ENCODE measurements at regions of chr10 and their contacts with region 1.

Region 1: DNA sequence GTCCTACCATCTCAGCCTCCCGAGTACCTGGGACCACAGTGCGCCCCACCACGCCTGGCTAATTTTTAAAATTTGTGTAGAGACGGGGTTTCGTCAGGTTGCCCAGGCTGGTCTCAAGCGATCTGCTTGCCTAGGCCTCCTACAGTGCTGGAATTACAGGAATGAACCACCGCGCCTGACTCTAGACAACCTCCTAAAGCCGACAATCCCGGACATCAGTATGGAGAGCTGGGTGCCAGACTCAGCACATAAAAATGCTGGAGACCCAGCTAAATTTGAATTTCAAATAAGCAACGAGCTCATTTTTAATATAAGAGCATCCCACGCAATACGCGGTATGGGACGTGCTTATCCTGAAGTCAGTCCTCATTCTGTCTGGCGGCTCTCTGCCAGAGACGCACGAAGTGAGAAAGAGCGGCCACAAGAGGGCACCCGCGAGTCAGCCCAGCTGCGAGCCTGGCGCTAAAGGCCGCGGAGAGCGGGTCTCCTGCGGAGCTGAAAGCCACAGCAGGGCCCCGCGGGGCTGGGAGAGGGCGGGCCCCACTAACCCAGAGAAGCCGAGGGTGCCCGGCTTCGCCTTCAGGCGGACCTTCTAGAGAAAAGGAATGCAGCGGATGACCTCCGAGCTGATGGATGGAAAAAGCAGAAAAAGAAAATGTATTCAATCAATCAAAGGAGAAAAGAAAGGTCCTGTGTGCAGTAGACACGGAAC is 7.0 kb downstream of the CALY start:
- DNase-seq: peak; percentile 90
- H3K4me3 Mint-ChIP-seq: peak overlapping the region; percentile 24
- H3K27ac Mint-ChIP-seq: no peak overlapping the region
- H3K4me1 Mint-ChIP-seq: peaks cover 14% of the 10 kb centered on the region
- H3K27me3 Mint-ChIP-seq: peaks cover 42% of the 10 kb centered on the region

Region 2: DNA sequence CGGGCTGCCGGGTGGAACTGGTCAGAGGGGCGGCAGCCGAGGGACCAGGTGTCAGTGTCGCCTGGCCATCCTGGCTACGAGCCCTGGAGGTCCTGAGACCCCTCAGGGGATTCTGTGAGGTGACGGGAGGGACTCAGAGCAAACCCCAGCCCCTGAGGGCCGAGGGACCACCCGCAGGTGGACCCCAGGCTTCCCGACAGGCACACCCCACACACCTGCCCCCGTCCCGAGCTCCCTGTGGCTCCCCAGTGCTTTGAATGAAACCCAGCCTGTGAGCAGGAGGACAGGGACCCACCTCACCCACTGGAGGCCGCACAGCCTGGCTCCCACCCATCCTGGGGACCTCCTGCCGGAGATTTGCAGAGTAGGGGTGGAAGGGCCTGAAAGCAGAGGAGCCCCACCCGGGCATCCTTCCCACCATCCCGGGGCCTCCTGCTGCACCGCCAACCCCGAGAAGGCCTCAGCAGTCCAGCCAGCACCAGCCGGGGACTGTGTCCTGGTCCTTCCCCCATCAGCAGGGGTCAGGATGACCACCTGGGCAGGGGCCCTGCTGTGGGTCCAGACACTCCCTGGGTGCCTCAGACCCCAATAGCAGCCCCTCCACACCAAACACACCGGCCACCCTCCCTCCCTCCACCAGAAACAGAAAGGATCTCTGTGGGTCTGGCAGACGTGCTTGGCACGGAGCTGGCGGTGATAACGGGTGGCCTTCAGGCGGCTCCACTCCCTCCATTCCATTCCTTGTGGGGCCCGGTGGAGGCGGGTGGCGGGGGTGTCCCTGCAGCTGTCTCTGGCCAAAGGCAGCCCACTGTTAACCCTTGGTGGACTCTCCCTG is 78.0 kb before region 1 on chr10:
- CTCF ChIA-PET with region 1: no interaction called
- intact Hi-C with region 1: no loop called
- DNase-seq: no peak
- H3K4me3 Mint-ChIP-seq: no peak overlapping the region
- H3K27ac Mint-ChIP-seq: no peak overlapping the region
- H3K4me1 Mint-ChIP-seq: no peaks in the 10 kb centered on the region
- H3K27me3 Mint-ChIP-seq: no peaks in the 10 kb centered on the region

Region 3: GRCh38 chr10:133318494-133319127 is 11.0 kb before region 1 on chr10:
- CTCF ChIA-PET with region 1: interaction called, 10 read pairs
- intact Hi-C with region 1: no loop called
- DNase-seq: peak; percentile 74
- H3K4me3 Mint-ChIP-seq: peak overlapping the region; percentile 59
- H3K27ac Mint-ChIP-seq: no peak overlapping the region
- H3K4me1 Mint-ChIP-seq: peaks cover 7% of the 10 kb centered on the region
- H3K27me3 Mint-ChIP-seq: peaks cover 6% of the 10 kb centered on the region

Region 4: DNA sequence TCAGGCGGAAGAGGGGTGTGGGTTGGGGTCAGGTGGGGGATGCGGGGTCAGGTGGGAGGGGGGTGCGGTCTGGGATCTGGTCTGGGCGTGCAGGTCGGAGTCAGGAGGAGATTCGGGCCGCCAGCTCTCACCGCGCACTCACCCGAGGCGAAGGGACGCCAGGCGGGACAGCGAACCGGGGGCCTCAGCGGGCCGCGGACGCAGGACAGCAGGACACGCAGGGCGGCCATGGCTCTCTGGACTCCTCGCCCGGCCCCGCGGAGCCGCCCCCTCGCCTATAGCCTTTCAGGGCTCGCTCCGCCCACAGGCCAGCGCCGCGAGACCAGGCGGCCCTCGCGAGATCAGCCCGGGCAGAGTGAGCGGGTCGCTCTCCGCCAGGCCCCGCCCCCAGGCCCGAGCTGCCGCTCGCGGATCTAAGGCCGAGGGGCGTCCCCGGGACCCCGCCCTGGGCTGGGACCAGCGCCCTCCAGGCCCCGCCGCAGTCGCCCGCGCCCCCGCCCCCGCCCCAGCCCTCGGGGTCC is 43.5 kb after region 1 on chr10 and contains the start of gene ECHS1:
- CTCF ChIA-PET with region 1: interaction called, 5 read pairs
- intact Hi-C with region 1: loop called (anchors 5 kb)
- DNase-seq: peak; percentile 96
- H3K4me3 Mint-ChIP-seq: peak within 1 kb of the TSS; percentile 77
- H3K27ac Mint-ChIP-seq: no peak within 1 kb of the TSS
- H3K4me1 Mint-ChIP-seq: peaks cover 12% of the 10 kb centered on the region
- H3K27me3 Mint-ChIP-seq: no peaks in the 10 kb centered on the region
- total RNA-seq, gene ECHS1: 45.8 to 48.7 TPM

Region 5: DNA sequence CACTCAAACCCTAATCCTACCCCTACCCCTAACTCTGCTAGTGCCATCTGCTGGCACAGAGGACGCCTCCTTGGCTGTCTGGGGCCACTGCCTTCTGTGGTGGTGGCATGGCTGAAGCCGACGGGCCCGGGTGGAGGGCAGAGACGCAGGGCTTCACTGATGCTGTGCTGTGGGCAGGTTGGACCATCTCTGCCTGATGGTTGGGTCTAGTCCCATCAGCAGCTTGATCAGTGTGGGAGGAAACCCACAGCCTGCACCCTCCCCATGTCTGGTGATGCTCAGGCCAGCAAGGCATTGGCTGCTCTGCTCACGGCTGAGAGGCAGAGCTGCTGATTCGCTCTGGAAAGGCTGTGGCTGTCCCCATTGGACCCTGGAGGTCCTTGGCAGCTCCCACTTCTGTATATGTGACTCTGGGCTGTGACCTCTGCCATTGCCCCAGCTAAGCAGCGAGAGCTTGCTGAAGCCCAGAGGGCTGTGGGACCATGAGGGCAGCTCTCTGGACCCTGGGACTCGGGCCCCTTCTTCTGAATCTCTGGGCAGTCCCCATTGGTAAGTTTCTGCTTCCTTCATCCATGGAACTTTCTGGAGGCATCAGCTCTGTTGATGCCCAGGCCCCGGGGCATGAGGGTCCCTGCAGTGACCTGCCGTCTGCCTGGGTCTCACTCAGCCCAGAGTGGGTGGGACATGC is 124.0 kb after region 1 on chr10 and contains the start of gene SCART1:
- CTCF ChIA-PET with region 1: no interaction called
- intact Hi-C with region 1: no loop called
- DNase-seq: no peak
- H3K4me3 Mint-ChIP-seq: no peak within 1 kb of the TSS
- H3K27ac Mint-ChIP-seq: no peak within 1 kb of the TSS
- H3K4me1 Mint-ChIP-seq: no peaks in the 10 kb centered on the region
- H3K27me3 Mint-ChIP-seq: no peaks in the 10 kb centered on the region
- total RNA-seq, gene SCART1: 1.5 to 1.6 TPM

Region 6: DNA sequence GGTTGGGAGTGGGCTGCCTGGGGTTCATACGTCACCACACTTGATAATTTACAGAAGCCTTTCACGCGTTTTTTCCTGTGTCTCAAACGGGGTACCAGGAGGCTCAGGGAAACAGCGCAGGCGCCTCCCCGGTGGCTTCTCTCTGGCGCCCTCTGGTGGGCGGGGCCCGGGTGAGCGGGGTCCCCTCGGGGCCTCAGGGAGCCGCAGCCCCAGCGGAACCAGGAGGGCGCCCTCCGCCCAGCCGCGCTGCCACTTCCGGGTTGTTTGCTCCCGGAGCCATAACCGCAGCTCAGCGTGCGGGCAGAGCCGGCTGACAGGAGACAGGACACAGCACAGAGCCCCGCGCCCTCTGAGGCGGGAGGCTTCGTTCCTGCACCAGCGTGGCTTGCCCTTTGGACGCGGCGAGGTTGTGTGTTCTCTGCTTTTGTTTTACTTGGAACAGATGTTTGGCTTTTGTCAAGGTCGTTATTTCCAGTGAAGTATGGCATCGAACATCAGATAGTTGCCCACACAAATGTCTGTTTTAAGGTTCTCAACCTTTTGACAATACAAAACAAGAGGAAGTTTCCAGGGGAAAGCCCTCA is 190.6 kb after region 1 on chr10:
- CTCF ChIA-PET with region 1: interaction called, 5 read pairs
- intact Hi-C with region 1: loop called (anchors 1 kb)
- DNase-seq: peak; percentile 96
- H3K4me3 Mint-ChIP-seq: peak overlapping the region; percentile 73
- H3K27ac Mint-ChIP-seq: peak overlapping the region; percentile 8
- H3K4me1 Mint-ChIP-seq: peaks cover 6% of the 10 kb centered on the region
- H3K27me3 Mint-ChIP-seq: no peaks in the 10 kb centered on the region